HepG2 (cell line): ENCODE measurements at regions of chr6 and their contacts with region 1.

Region 1: GRCh38 chr6:134640975-134641429 is 308.9 kb downstream of the ALDH8A1 start:
- DNase-seq: peak; percentile 79
- ATAC-seq: peak; percentile 96
- H3K4me3 ChIP-seq: no peak overlapping the region
- H3K27ac ChIP-seq: no peak overlapping the region
- H3K4me1 ChIP-seq: 0 out of 2 replicates have a peak, but pooled peaks cover 4% of the 10 kb centered on the region
- H3K27me3 ChIP-seq: no peaks in the 10 kb centered on the region; a peak in 1 of 5 replicates
- CTCF ChIP-seq: peak; percentile 94
- EP300 ChIP-seq: no peak
- POLR2A ChIP-seq: no peak
- RAD21 ChIP-seq: peak; percentile 85; the same call in 1 of the 2 replicates

Region 2: DNA sequence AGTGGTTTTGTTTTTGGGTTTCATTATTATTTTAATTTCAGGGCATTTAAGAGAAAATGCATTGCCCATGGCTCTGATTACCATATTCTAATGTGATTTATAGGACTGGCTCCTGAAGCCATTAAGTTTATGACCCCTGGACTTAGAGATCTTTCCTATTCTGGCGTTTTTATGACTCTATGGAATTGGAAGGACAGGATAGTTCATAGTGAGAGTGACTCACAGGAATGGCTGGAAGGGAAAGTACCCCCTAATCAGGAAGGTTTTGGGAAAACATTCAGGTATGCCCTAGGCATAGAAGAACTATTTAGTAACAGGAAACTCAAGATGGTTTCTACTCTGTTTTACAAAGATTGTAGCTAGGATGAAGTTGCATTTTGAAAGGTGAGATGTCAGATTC is 480.0 kb before region 1 on chr6:
- CTCF ChIA-PET with region 1: interaction called, 44 read pairs
- POLR2A ChIA-PET with region 1: no interaction called
- in situ Hi-C with region 1: no loop called
- intact Hi-C with region 1: loop called (anchors 1 kb)
- DNase-seq: no peak
- ATAC-seq: no peak
- H3K4me3 ChIP-seq: no peak overlapping the region
- H3K27ac ChIP-seq: no peak overlapping the region
- H3K4me1 ChIP-seq: no peaks in the 10 kb centered on the region
- H3K27me3 ChIP-seq: no peaks in the 10 kb centered on the region
- CTCF ChIP-seq: no peak
- EP300 ChIP-seq: no peak
- POLR2A ChIP-seq: no peak
- RAD21 ChIP-seq: no peak

Region 3: DNA sequence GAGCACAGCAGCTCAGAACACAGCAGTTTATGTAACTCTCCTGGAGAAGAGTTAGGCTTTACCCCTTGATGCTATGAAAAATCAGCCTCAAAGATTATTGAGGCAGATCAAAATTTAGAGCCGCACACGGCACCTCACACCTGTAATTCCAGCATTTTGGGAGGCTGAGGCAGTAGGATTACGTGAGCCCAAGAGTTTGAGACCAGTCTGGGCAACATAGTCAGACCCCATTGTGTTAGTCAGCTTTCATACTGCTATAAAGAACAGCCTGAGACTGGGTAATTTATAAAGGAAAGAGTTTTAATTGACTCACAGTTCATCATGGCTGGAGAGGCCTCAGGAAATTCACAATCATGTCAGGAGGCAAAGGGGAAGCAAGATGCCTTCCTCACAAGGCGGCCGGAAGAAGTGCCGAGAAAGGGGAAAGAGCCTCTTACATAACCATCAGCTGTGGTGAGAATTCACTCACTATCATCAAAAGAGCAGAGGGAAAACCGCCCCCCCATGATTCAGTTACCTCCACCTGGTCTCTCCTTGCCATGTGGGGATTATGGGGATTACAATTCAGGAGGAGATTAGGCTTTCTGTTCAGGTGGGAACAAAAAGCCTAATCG is 410.8 kb before region 1 on chr6:
- CTCF ChIA-PET with region 1: no interaction called
- POLR2A ChIA-PET with region 1: no interaction called
- in situ Hi-C with region 1: no loop called
- intact Hi-C with region 1: no loop called
- DNase-seq: no peak
- ATAC-seq: no peak
- H3K4me3 ChIP-seq: no peak overlapping the region
- H3K27ac ChIP-seq: no peak overlapping the region
- H3K4me1 ChIP-seq: no peaks in the 10 kb centered on the region
- H3K27me3 ChIP-seq: no peaks in the 10 kb centered on the region
- CTCF ChIP-seq: no peak
- EP300 ChIP-seq: no peak
- POLR2A ChIP-seq: no peak
- RAD21 ChIP-seq: no peak

Region 4: DNA sequence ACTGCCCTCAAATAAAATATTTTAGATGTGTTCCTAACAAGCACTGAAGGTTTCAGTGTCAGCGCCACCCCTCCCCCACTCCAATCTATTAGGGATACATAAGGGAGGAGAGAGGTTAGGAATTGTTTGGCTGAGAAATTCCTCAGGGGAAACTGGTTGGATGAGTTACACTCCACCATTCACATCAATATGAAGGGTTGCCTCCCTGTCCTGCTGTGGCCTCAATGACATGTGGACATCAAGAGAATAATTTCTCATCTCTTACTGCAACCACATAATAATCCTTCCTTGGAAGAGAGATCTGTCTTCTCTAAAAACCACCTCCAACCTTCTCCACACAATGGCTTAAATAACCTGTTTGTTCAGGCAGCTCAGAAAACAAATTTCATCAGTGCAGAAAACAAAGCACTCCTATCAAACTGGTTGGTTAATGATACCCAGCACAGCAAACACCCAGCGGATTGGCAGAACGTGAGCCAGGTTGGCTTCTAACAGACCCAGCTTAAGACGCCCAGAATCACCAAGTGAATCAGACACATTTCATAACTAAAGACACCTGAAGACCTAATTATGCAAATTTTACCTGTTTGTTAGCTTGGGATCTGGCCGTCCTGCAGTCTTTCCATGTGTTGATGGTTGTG is 187.0 kb before region 1 on chr6:
- CTCF ChIA-PET with region 1: no interaction called
- POLR2A ChIA-PET with region 1: no interaction called
- in situ Hi-C with region 1: no loop called
- intact Hi-C with region 1: loop called (anchors 10 kb)
- DNase-seq: no peak
- ATAC-seq: no peak
- H3K4me3 ChIP-seq: no peak overlapping the region
- H3K27ac ChIP-seq: no peak overlapping the region
- H3K4me1 ChIP-seq: no peaks in the 10 kb centered on the region
- H3K27me3 ChIP-seq: no peaks in the 10 kb centered on the region; a peak in 1 of 5 replicates
- CTCF ChIP-seq: no peak
- EP300 ChIP-seq: no peak
- POLR2A ChIP-seq: no peak
- RAD21 ChIP-seq: no peak

Region 5: GRCh38 chr6:134689641-134690040 is 48.6 kb after region 1 on chr6:
- CTCF ChIA-PET with region 1: no interaction called
- POLR2A ChIA-PET with region 1: no interaction called
- in situ Hi-C with region 1: no loop called
- intact Hi-C with region 1: no loop called
- DNase-seq: no peak
- ATAC-seq: no peak
- H3K4me3 ChIP-seq: no peak overlapping the region
- H3K27ac ChIP-seq: no peak overlapping the region
- H3K4me1 ChIP-seq: no peaks in the 10 kb centered on the region
- H3K27me3 ChIP-seq: no peaks in the 10 kb centered on the region
- CTCF ChIP-seq: no peak
- EP300 ChIP-seq: no peak
- POLR2A ChIP-seq: no peak
- RAD21 ChIP-seq: no peak